A673 (cell line): ENCODE measurements at regions of chr14 and their contacts with region 1.

Region 1: GRCh38 chr14:33369972-33370371 is 431.3 kb downstream of the NPAS3 start:
- DNase-seq: no peak
- H3K4me3 ChIP-seq: no peak overlapping the region
- H3K27ac ChIP-seq: no peak overlapping the region
- H3K4me1 ChIP-seq: peaks cover 4% of the 10 kb centered on the region
- H3K27me3 ChIP-seq: no peaks in the 10 kb centered on the region
- CTCF ChIP-seq: no peak

Region 2: GRCh38 chr14:33404964-33405574 is 35.1 kb after region 1 on chr14:
- CTCF ChIA-PET with region 1: no interaction called
- POLR2A ChIA-PET with region 1: interaction called, 18 read pairs
- intact Hi-C with region 1: no loop called
- DNase-seq: no peak
- H3K4me3 ChIP-seq: no peak overlapping the region
- H3K27ac ChIP-seq: no peak overlapping the region
- H3K4me1 ChIP-seq: peaks cover 10% of the 10 kb centered on the region
- H3K27me3 ChIP-seq: no peaks in the 10 kb centered on the region
- CTCF ChIP-seq: no peak

Region 3: GRCh38 chr14:33682740-33683139 is 312.8 kb after region 1 on chr14:
- CTCF ChIA-PET with region 1: no interaction called
- POLR2A ChIA-PET with region 1: no interaction called
- intact Hi-C with region 1: no loop called
- DNase-seq: no peak
- H3K4me3 ChIP-seq: no peak overlapping the region
- H3K27ac ChIP-seq: no peak overlapping the region
- H3K4me1 ChIP-seq: peaks cover 24% of the 10 kb centered on the region
- H3K27me3 ChIP-seq: no peaks in the 10 kb centered on the region
- CTCF ChIP-seq: no peak